ENCODE measurements at regions of chr1 and their contacts with region 1.

Region 1: DNA sequence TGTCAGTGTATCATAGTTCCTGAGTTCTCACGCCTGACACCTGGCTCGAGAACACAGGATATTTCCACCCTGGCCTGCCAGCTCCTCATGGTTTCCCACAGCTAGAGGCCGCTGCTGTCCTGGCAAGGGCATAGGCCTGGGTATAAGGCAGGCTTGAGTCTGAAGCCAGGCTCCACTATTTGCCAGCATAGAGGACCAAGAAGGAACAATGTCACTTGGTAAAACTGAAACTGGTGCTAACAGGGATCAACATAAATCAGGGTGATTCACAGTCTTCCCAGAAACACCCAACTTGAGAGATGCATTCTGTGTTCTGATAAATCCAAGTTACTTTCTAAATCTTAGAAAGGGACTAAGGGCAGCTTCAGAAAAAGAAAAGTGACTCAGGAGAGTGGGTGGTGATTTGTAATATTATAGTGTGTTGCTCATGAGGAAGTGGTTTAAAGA is 6.9 kb upstream of the S100A2 start:
- DNase-seq: peak; percentile 53 to 96 (median 82)

Region 2: GRCh38 chr1:153352523-153352922 is 220.1 kb before region 1 on chr1:
- intact Hi-C with region 1: loop called (anchors 10 kb)
- DNase-seq: peak; percentile 23 to 96 (median 75)

Region 3: DNA sequence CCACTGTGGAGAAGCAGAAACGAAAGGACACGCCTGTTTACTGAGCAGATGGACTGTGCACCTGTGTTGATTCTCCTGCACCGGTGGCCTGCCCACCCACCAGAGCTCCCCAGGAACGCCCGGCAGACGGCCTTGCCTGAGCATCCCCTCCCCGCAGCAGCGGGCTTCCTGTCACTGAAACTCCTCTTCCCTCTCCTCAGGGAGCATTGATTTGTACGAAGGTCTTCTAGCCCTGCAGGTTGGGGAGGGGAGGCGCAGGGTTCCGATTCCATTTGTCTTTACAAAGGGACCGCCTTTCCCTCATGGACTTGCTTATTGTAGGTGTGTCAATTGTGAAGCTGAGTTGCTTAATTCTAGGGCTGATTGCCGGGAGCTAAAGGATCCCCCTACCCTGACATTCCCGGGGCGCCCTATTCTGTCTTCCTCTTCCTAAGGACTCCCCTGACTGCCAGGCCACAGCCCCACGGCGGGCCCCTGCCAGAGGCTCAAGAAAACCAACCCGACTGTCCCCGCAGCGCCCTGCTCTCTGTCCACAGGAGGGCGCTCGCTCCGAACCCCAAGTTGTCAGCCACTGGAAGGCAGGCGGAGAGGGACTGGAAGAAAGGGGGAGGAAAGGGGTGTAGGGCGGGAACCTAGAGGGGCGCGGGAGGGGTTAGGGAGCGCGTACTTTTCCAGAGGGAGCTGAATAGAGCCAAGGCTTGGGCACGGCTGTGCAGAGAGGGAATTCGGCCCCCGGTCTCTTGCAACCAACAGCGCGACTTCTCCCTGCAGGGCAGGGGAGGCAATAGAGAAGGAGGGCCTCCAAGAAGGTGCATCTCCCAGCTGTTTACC is 39.6 kb before region 1 on chr1:
- intact Hi-C with region 1: loop called (anchors 5 kb)
- DNase-seq: peak; percentile 53 to 97 (median 78)

Region 4: GRCh38 chr1:153658400-153659174 is 86.0 kb after region 1 on chr1 and contains the start of gene SNAPIN:
- intact Hi-C with region 1: loop called (anchors 2 kb)
- DNase-seq: peak; percentile 84 to 99 (median 90)

Region 5: GRCh38 chr1:153749408-153750005 is 176.9 kb after region 1 on chr1:
- intact Hi-C with region 1: loop called (anchors 5 kb)
- DNase-seq: peak; percentile 67 to 97 (median 82)